ENCODE measurements at regions of chr15 and their contacts with region 1.

Region 1: DNA sequence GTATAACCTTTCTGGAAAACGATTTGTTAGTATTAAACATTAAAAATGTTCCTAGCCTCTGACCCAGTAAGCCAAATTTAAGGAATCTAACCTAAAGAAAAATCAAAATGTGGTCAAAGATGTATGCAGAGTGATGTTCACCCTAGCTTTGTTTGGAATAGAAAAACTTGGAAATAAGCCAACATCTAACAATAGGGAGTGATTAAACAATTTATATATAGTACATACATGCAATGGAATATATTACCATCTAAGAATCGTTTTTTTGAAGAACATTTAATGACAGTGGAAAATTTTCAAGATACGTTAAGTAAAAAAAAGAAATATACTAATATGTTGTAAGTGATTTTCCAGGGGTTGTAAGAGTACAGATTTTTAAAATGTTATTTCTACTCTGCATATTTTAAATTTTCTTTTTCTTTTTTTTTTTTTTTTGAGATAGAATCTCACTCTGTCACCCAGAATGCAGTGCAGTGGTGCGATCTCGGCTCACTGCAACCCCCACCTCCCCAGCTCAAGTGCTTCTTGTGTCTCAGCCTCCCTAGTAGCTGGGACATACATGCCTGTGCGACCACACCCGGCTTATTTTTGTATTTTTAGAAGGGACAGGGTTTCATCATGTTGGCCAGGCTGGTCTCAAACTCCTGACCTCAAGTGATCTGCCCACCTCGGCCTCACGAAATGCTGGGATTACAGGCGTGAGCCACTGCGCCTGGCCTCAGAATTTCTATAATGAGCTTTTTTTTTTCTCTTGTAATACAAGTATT is 54.9 kb downstream of the ANP32A start:
- DNase-seq: peak; percentile 80
- H3K4me3 ChIP-seq: no peak overlapping the region
- H3K27ac ChIP-seq: peak overlapping the region; percentile 35
- H3K4me1 ChIP-seq: peaks cover 52% of the 10 kb centered on the region
- H3K27me3 ChIP-seq: no peaks in the 10 kb centered on the region
- CTCF ChIP-seq: no peak
- POLR2A ChIP-seq: no peak

Region 2: DNA sequence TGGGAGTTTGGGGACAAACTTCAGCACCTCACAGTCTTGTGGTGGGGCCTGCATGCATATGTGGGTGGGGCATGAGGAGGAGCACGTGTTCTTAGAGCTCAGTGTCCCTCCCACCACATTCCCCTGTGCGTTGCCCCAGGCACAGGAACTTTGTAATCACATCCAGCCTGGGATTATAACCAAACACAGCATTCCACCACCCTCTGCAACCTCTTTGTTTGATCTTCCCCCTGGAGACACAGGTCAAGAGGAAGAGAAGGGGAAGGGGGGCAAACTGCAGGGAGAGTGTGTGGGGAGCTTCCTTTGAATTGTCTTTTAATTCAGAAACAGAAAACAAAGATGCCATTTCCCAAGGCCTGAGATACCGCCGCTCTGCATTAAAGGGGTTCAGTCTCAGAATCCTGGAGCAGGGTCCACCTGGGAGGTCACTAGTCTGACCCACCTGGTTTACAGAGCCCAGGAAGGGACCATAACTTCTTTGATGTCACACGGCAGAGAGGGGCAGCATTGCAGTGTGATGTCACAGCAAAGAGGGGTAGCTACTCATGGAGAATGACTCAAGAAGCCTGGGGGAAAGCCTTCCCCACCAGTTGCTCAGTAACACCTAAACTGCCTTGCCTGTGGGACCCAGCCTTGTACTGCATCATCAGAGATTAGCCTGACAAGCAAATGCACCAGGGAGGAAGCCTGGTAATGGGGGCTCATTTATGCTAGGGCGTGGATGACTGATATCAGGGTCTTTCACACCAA is 819.7 kb before region 1 on chr15:
- CTCF ChIA-PET with region 1: no interaction called
- POLR2A ChIA-PET with region 1: no interaction called
- dilution Hi-C with region 1: no loop called
- intact Hi-C with region 1: no loop called
- DNase-seq: no peak
- H3K4me3 ChIP-seq: no peak overlapping the region
- H3K27ac ChIP-seq: no peak overlapping the region
- H3K4me1 ChIP-seq: no peaks in the 10 kb centered on the region
- H3K27me3 ChIP-seq: no peaks in the 10 kb centered on the region
- CTCF ChIP-seq: no peak
- POLR2A ChIP-seq: no peak

Region 3: DNA sequence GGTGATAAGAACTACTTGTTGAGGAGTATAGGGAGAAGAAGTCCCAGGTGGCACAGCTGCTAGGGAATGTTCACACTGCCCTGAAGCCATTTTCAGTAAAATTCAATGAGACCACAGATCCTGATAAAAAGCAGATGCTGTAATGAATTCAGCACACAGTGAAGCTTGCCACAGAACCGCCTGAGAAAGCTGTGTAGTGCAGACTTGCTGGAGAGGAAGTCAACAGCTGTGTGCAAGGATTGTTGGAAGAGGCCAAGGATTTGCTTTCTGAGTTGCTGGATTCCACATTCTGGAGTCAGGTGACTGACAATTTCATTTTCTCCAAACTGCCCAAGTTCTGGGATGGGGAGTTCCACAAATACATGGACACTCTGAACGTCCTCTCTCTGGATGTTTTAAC is 16.0 kb before region 1 on chr15:
- CTCF ChIA-PET with region 1: interaction called, 4 read pairs
- POLR2A ChIA-PET with region 1: interaction called, 11 read pairs
- dilution Hi-C with region 1: no loop called
- intact Hi-C with region 1: loop called (anchors 1 kb)
- DNase-seq: no peak
- H3K4me3 ChIP-seq: no peak overlapping the region
- H3K27ac ChIP-seq: no peak overlapping the region
- H3K4me1 ChIP-seq: peaks cover 6% of the 10 kb centered on the region
- H3K27me3 ChIP-seq: peaks cover 10 to 11% of the 10 kb centered on the region in 2 experiments
- CTCF ChIP-seq: no peak
- POLR2A ChIP-seq: no peak

Measured in endothelial cell of umbilical vein (primary cell).